Posterior cingulate gyrus (tissue), 11 donors: ENCODE measurements at regions of chr1 and their contacts with region 1.

Region 1: DNA sequence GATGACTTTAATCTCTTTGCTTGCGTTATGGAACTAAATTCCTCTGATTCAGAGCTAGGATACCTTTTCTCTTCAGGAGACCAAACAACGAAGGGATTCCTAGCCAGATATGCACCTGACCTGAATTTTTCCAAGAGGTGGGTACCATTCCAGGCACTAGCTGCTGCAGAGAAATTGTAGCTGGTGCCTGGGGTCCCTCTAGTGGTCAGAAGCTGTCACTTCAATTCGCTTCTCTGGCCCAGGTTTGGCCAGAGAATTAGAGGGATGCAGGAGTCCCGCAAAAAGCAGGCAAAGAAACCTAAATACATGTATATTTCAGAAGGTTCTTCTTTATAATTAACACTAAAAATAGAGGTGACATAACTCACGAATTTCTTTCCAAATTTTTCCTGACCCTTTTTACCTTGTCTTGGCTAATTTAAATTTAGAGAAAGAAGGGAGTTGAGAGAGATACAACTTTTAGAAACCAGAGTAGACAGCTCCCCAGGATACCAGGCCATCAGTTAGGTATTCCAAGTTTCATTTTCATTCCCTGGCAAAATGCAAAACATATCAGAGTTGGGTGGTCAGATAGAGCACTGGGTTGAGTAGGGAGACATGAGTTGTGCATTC is 9.6 kb downstream of the ACKR1 start:
- DNase-seq: peak in 7 of 10 donors; percentile 53 to 92 (median 57)

Region 2: GRCh38 chr1:159051436-159051835 is 162.8 kb before region 1 on chr1:
- intact Hi-C with region 1: no loop called
- DNase-seq: no peak

Region 3: DNA sequence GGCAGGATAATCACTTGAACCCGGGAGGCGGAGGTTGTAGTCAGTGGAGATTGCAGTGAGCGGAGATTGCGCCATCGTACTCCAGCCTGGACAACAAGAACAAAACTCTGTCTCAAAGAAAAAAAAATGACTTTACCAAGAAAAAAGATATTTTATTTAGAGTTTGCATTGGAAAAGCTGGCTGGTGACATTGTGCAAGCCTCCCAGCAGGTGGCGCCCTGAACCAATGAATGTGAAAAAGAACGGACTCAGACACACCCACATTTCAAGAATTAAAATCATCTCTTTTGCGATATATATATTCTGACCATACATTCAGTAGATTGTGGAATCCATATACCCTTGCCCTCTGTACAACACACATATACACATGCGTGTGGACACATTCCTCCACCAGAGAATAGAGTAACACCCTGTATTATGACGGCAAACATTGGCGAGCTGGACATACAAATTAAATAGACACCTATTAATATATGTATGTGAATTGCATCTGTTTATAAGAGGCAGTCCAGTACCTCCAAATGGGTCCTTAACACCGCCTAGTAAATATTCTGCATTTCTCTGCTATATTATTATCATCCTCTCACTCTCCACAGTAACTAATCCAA is 81.9 kb before region 1 on chr1:
- intact Hi-C with region 1: loop called (anchors 2 kb)
- DNase-seq: peak; percentile 37 to 94 (median 66)

Region 4: DNA sequence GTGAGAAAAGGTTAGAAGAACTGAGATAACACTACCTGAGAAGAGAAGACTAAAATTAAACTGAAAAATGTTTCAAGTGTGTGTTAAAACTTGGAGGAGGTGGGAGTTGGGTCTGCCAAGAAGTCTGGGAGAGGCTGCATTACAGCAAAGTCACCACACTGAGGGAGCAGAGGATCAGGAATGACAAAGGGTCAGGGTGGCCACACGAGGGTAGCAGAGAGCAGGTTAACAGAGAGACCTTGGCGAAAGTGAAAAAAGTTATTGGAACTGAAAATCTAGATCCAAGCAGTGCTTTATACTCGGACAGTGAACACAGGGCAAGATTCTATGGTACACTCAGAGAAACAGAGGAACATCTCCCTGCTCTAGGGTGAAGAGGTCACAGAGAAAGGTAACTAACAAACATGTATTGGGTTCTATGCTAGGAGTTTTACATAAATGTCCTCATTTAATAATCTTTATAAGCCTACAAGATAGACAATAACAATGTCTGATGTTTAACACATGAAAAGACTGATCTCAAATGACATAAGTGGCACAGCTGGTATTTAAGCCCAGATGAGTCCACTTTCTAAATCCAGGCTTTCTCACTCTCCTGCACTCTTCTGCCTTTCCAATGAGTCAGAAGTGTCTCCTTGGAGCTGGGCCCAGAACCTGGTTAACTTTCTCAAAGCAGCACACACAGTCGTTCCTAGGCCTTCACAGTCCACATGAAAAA is 53.1 kb before region 1 on chr1:
- intact Hi-C with region 1: loop called (anchors 1 kb)
- DNase-seq: peak; percentile 57 to 95 (median 76)

Region 5: GRCh38 chr1:159229486-159229885 is 15.2 kb after region 1 on chr1:
- intact Hi-C with region 1: no loop called
- DNase-seq: peak in 1 of 10 donors; percentile 64

Region 6: DNA sequence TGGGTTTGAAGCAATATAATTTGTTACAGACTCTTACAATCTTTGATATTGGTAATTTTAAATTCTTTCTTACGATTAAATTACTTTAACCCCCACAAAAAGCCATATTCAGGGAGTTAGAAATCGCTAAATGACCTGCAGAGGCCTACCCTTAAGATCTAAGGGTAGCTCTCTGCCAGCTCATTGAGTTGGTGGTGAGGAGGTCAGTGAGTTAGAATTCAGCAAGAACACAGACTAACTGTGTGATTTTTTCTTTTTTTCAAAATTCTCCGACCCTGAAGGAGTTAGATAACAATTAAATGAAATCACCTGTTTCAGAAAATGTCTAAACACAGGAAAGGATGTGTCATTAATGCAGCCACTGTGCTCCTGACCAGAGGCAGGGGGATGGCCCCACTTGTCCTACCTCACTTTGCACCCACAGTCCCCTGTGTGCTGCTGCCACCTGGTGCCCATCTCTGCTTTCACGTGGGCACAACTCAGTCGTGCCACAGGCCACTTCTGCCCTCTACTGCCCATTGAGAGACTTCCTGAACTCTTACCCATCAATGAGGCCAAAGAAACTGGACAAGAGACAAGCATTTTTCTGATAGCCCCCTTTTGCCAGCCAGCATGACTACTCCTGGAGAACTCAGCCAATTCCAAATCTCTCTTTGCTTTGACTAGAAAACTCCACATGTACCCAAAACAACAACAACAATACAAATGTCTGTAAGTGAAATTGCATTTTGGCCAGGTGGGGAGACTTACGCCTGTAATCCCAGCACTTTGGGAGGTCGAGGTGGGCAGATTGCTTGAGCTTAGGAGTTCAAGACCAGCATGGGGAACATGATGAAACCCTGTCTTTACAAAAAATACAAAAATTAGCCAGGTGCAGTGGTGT is 677.3 kb after region 1 on chr1:
- intact Hi-C with region 1: loop called (anchors 5 kb)
- DNase-seq: peak; percentile 70 to 97 (median 85)